H1 (cell line): ENCODE measurements at regions of chr3 and their contacts with region 1.

Region 1: GRCh38 chr3:11613851-11614487 is 29.7 kb downstream of the VGLL4 start:
- DNase-seq: no peak
- H3K4me3 ChIP-seq: no peak overlapping the region
- H3K27ac ChIP-seq: peak overlapping the region; percentile 46; the same call in 1 of the 2 replicates
- H3K4me1 ChIP-seq: peaks cover 9 to 31% (median 18%) of the 10 kb centered on the region in 4 experiments
- H3K27me3 ChIP-seq: no peaks in the 10 kb centered on the region
- CTCF ChIP-seq: no peak
- EP300 ChIP-seq: no peak
- POLR2A ChIP-seq: no peak
- RAD21 ChIP-seq: no peak

Region 2: GRCh38 chr3:11626084-11626463 is 12.1 kb after region 1 on chr3:
- CTCF ChIA-PET with region 1: interaction called, 18 read pairs
- POLR2A ChIA-PET with region 1: interaction called, 3 read pairs
- DNase-seq: no peak
- H3K4me3 ChIP-seq: no peak overlapping the region
- H3K27ac ChIP-seq: no peak overlapping the region
- H3K4me1 ChIP-seq: no peaks in the 10 kb centered on the region; a peak in 1 of 7 replicates
- H3K27me3 ChIP-seq: no peaks in the 10 kb centered on the region
- CTCF ChIP-seq: no peak
- EP300 ChIP-seq: no peak
- POLR2A ChIP-seq: no peak
- RAD21 ChIP-seq: no peak